K562 (cell line): ENCODE measurements at regions of chr6 and their contacts with region 1.

Region 1: GRCh38 chr6:26216356-26216885 is 129.2 kb downstream of the HFE start:
- DNase-seq: peak; percentile 83 to 98 (median 90)
- ATAC-seq: peak; percentile 69
- H3K4me3 ChIP-seq: peak overlapping the region; percentile 61
- H3K27ac ChIP-seq: peak overlapping the region; percentile 91
- H3K4me1 ChIP-seq: peaks cover 15 to 23% of the 10 kb centered on the region in 2 experiments
- H3K27me3 ChIP-seq: no peaks in the 10 kb centered on the region
- CTCF ChIP-seq: no peak; a peak in 1 of 6 replicates
- EP300 ChIP-seq: no peak
- POLR2A ChIP-seq: peak; percentile 100
- RAD21 ChIP-seq: no peak; a peak in 1 of 4 replicates

Region 2: GRCh38 chr6:25297039-25297441 is 919.4 kb before region 1 on chr6:
- CTCF ChIA-PET with region 1: no interaction called
- POLR2A ChIA-PET with region 1: no interaction called
- in situ Hi-C with region 1: no loop called
- intact Hi-C with region 1: no loop called
- DNase-seq: no peak
- ATAC-seq: no peak
- H3K4me3 ChIP-seq: no peak overlapping the region
- H3K27ac ChIP-seq: no peak overlapping the region
- H3K4me1 ChIP-seq: no peaks in the 10 kb centered on the region
- H3K27me3 ChIP-seq: peaks cover 0 to 12% of the 10 kb centered on the region in 2 experiments; a peak in 2 of 5 replicates
- CTCF ChIP-seq: no peak
- EP300 ChIP-seq: no peak
- POLR2A ChIP-seq: no peak
- RAD21 ChIP-seq: no peak

Region 3: DNA sequence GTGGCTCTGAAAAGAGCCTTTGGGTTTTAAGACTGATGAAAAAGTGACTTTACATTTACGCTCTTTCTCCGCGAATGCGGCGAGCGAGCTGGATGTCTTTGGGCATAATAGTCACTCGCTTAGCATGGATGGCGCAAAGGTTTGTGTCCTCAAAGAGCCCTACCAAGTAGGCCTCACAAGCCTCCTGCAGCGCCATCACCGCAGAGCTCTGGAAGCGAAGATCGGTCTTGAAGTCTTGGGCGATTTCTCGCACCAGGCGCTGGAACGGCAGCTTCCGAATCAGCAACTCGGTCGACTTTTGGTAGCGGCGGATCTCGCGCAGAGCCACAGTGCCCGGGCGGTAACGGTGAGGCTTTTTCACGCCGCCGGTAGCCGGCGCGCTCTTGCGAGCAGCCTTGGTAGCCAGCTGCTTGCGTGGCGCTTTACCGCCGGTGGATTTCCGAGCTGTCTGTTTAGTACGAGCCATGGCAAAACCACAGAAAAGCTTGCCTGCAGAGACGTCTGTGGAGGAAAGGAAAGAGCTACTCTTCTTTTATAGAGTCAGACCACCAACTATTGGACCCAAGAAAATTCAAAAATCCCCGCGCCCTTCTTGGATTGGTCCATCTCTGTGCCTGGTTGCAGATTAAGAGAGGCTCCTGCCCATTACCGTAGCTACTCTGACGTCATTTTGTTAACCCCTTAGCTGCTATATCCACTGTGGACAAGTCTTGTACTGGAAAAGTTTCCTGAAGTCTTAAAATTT is 184.7 kb before region 1 on chr6:
- CTCF ChIA-PET with region 1: no interaction called
- POLR2A ChIA-PET with region 1: interaction called, 158 read pairs
- in situ Hi-C with region 1: no loop called
- intact Hi-C with region 1: loop called (anchors 1 kb)
- DNase-seq: peak; percentile 82 to 99 (median 94)
- ATAC-seq: peak; percentile 67
- H3K4me3 ChIP-seq: peak overlapping the region; percentile 61
- H3K27ac ChIP-seq: peak overlapping the region; percentile 99
- H3K4me1 ChIP-seq: peaks cover 16 to 42% of the 10 kb centered on the region in 2 experiments
- H3K27me3 ChIP-seq: no peaks in the 10 kb centered on the region
- CTCF ChIP-seq: peak; percentile 28 to 60 (median 40)
- EP300 ChIP-seq: peak; percentile 77
- POLR2A ChIP-seq: peak; percentile 100
- RAD21 ChIP-seq: peak; percentile 4 to 31; a peak in 1 of 4 replicates

Region 4: DNA sequence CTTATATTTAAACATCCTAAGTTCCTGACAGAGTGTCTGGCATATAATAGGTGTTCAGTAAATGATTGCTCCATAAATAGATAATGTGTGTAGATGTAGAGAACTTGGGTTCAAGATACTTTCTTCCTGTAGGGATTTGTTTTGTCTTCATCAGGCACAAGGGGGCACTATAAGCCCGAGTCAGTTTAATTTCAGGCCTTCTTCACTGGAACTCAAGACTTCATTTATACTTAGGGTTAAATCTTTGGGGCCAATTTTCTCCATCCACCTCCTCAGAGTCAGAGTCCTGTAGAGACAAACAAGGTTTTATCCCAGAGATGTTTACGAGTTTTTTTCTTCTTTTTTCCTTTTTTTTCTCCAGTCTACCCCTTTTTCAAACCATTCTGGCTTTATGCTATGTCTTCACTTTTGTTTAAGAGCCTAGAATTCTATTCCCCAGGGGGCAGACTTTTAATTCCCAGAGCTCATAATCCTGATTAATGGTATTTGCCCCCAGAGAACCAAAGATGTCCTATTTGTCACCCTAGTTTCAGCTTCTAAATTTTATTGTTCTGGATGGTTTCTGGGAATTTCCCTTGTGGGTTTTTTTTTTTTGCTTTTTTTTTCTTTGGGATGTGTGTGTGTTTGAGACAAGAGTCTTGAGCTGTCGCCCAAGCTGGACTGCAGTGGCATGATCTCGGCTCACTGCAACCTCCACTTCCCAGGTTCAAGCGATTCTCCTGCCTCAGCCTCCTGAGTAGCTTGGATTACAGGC is 40.8 kb before region 1 on chr6:
- CTCF ChIA-PET with region 1: interaction called, 4 read pairs
- POLR2A ChIA-PET with region 1: interaction called, 54 read pairs
- in situ Hi-C with region 1: no loop called
- intact Hi-C with region 1: loop called (anchors 1 kb)
- DNase-seq: peak; percentile 60 to 88 (median 71)
- ATAC-seq: peak; percentile 41
- H3K4me3 ChIP-seq: no peak overlapping the region
- H3K27ac ChIP-seq: no peak overlapping the region
- H3K4me1 ChIP-seq: peaks cover 14% of the 10 kb centered on the region in 2 experiments
- H3K27me3 ChIP-seq: no peaks in the 10 kb centered on the region
- CTCF ChIP-seq: peak; percentile 59 to 87 (median 77)
- EP300 ChIP-seq: no peak; the same call in 1 of the 2 replicates
- POLR2A ChIP-seq: no peak
- RAD21 ChIP-seq: peak; percentile 87 to 88

Region 5: GRCh38 chr6:26258200-26258977 is 42.0 kb after region 1 on chr6:
- CTCF ChIA-PET with region 1: no interaction called
- POLR2A ChIA-PET with region 1: interaction called, 94 read pairs
- in situ Hi-C with region 1: no loop called
- intact Hi-C with region 1: no loop called
- DNase-seq: peak in 3 of 4 experiments; percentile 48 to 51 (median 49)
- ATAC-seq: peak; percentile 77
- H3K4me3 ChIP-seq: no peak overlapping the region
- H3K27ac ChIP-seq: no peak overlapping the region
- H3K4me1 ChIP-seq: peaks cover 3 to 11% of the 10 kb centered on the region in 2 experiments; a peak in 3 of 5 replicates
- H3K27me3 ChIP-seq: no peaks in the 10 kb centered on the region
- CTCF ChIP-seq: peak; percentile 41 to 66 (median 56); a peak in 5 of 6 replicates
- EP300 ChIP-seq: no peak
- POLR2A ChIP-seq: no peak
- RAD21 ChIP-seq: peak; percentile 18 to 57; a peak in 2 of 4 replicates

Region 6: GRCh38 chr6:26312501-26313390 is 96.3 kb after region 1 on chr6:
- CTCF ChIA-PET with region 1: no interaction called
- POLR2A ChIA-PET with region 1: interaction called, 130 read pairs
- in situ Hi-C with region 1: loop called (anchors 5 kb)
- intact Hi-C with region 1: loop called (anchors 2 kb)
- DNase-seq: peak; percentile 69 to 95 (median 72)
- ATAC-seq: peak; percentile 76
- H3K4me3 ChIP-seq: peak overlapping the region; percentile 53
- H3K27ac ChIP-seq: peak overlapping the region; percentile 66
- H3K4me1 ChIP-seq: peaks cover 4 to 34% of the 10 kb centered on the region in 2 experiments
- H3K27me3 ChIP-seq: no peaks in the 10 kb centered on the region
- CTCF ChIP-seq: no peak; a peak in 1 of 6 replicates
- EP300 ChIP-seq: peak; percentile 65
- POLR2A ChIP-seq: no peak
- RAD21 ChIP-seq: peak in 1 of 2 experiments; percentile 45; a peak in 2 of 4 replicates

Region 7: GRCh38 chr6:26596579-26597388 is 380.4 kb after region 1 on chr6 and contains the start of gene ABT1:
- CTCF ChIA-PET with region 1: no interaction called
- POLR2A ChIA-PET with region 1: interaction called, 37 read pairs
- in situ Hi-C with region 1: no loop called
- intact Hi-C with region 1: no loop called
- DNase-seq: peak; percentile 95 to 100 (median 97)
- ATAC-seq: peak; percentile 83
- H3K4me3 ChIP-seq: peak within 1 kb of the TSS; percentile 91
- H3K27ac ChIP-seq: peak within 1 kb of the TSS; percentile 88
- H3K4me1 ChIP-seq: peaks cover 16 to 19% of the 10 kb centered on the region in 2 experiments; a peak in 4 of 5 replicates
- H3K27me3 ChIP-seq: no peaks in the 10 kb centered on the region
- CTCF ChIP-seq: no peak; a peak in 1 of 6 replicates
- EP300 ChIP-seq: peak; percentile 82
- POLR2A ChIP-seq: peak; percentile 97
- RAD21 ChIP-seq: 0 out of 4 replicates have a peak, but pooled peaks of 1 of the 2 experiments have one; percentile 4
- polyA plus RNA-seq, gene ABT1: 8.8 to 25.2 TPM